WTC11 (cell line): ENCODE measurements at regions of chr5 and their contacts with region 1.

Region 1: GRCh38 chr5:160133071-160133917 is 14.0 kb upstream of the PWWP2A start:
- DNase-seq: peak; percentile 64
- ATAC-seq: peak; percentile 80
- H3K4me3 Mint-ChIP-seq: peak overlapping the region; percentile 53
- H3K27ac Mint-ChIP-seq: peak overlapping the region; percentile 96
- H3K4me1 Mint-ChIP-seq: peaks cover 28% of the 10 kb centered on the region
- H3K27me3 Mint-ChIP-seq: no peaks in the 10 kb centered on the region
- CTCF ChIP-seq: no peak

Region 2: GRCh38 chr5:160119142-160119904 is 14.0 kb before region 1 on chr5 and contains the start of gene PWWP2A:
- CTCF ChIA-PET with region 1: interaction called, 3 read pairs
- POLR2A ChIA-PET with region 1: interaction called, 10 read pairs
- DNase-seq: peak; percentile 97
- ATAC-seq: peak; percentile 97
- H3K4me3 Mint-ChIP-seq: peak within 1 kb of the TSS; percentile 96
- H3K27ac Mint-ChIP-seq: peak within 1 kb of the TSS; percentile 95
- H3K4me1 Mint-ChIP-seq: peaks cover 18% of the 10 kb centered on the region
- H3K27me3 Mint-ChIP-seq: no peaks in the 10 kb centered on the region
- CTCF ChIP-seq: no peak
- total RNA-seq, gene PWWP2A: 61.1 to 63.8 TPM (median 62.4 TPM) in 3 replicates

Region 3: DNA sequence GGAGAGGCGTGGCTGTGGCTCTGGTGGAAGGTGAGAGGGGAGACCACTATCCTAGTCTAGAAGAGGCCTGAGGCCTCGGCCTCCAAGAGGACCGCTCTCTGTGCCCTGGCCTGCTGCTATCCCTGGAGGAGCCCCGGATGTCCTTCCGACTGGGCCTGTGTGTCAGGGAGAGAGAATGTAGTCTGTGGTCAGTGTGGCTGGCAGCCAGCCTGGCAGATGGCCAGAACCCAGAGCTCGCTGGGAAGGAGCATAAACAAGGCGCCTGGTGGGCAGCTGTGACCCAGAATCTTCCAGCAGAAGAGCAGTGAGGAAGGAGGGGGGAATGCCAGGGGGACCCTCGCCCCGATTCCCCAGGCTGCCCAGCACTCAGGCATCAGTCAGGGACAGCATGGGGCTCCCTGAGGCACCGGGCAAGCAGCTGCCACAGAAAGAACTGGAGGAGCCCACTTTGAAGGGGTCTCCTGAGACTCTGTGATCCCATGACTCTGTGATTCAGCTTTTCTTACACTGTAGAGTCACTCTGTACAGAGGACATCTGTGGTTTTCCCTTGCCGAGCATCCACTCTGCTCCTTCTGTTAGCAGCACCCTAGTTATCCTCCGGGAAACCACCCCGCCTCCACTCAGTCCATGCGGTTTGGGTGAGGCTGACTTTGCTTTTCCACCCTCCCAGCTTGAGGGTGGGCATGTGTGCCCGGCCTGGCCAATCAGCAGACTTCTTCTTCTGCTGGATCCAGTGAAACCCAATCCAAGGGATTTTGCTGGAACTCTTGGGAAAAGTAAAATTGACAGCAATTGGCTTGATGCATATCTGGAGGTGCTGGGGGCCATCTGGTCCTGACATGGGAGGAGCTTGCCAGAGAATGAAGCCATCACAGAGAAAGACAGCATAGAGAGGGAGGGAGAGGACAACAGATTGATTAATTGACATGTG is 32.1 kb after region 1 on chr5:
- CTCF ChIA-PET with region 1: interaction called, 6 read pairs
- POLR2A ChIA-PET with region 1: interaction called, 16 read pairs
- DNase-seq: peak; percentile 64
- ATAC-seq: peak; percentile 82
- H3K4me3 Mint-ChIP-seq: peak overlapping the region; percentile 38
- H3K27ac Mint-ChIP-seq: peak overlapping the region; percentile 96
- H3K4me1 Mint-ChIP-seq: peaks cover 69% of the 10 kb centered on the region
- H3K27me3 Mint-ChIP-seq: no peaks in the 10 kb centered on the region
- CTCF ChIP-seq: no peak